ENCODE measurements at regions of chr6 and their contacts with region 1.

Region 1: DNA sequence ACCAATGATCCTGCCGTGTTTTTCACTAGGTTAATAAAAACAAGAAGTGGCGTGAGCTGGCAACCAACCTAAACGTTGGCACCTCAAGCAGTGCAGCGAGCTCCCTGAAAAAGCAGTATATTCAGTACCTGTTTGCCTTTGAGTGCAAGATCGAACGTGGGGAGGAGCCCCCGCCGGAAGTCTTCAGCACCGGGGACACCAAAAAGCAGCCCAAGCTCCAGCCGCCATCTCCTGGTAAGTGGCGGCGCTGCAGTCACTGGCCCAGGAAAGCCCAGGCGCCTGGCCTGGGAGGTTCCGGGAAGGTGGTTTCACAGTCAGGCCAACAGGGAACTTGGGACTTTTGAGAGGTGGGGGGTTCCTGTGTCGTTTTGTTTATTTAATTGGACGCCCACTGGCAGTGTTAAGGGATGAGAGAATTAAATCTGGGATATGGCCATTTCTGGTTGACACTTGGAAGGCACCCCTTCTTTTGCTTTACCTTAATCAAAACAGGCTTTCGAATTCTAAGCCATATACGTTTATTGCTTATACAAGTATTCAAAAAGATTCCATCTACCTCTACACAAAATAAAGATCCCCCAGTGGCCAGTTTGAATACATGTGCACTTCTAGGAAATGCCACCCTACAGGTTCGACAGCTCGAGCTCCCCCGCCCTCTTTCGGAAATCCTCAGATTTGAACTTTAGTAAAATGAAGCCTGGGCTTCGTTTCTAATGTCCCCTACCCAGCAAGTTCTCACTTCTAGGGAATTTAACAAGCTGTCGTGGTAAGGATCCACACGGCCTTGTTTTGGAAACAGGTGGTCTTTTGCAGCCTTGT is 138.9 kb downstream of the TMEM242 start:
- DNase-seq: peak; percentile 85
- H3K4me3 ChIP-seq: no peak overlapping the region
- H3K27ac ChIP-seq: no peak overlapping the region
- H3K4me1 ChIP-seq: no peaks in the 10 kb centered on the region
- H3K27me3 ChIP-seq: no peaks in the 10 kb centered on the region
- CTCF ChIP-seq: peak; percentile 96

Region 2: DNA sequence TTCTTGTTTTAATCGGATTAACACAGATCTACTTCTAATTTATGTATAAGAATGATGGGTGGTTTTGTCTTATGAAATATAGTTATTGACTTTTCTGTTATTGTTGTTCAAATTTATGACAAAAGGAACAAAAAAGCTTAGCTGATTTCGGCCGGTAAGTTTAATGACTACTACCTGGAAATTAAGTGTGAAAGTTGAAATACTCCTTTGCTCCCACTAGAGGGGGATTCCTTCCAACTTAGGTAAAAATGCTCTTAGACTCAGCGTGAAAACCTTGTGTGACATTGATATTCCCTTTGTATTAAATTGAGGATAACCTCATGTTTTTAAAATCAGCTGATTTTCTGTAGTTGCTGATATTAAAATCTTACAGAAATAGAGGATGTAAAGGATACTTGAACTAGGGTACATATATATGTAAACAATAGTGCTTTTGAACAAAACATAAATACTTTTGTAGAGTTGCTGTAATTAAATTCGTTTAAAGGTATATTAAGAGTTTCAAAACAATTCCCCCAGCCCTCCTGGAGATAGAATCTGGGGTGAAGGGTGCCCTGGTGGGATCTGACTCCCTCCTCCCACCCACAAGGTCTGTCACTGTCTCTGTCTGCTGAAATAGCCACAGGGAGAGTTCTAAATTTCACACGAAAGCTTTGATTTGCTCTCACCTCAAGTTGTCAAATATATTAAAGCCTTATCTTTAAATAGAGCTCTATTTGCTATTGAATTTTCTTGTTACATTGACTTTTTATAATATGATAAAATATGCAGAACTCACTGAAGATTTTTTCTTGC is 149.8 kb before region 1 on chr6:
- intact Hi-C with region 1: loop called (anchors 5 kb)
- DNase-seq: no peak
- H3K4me3 ChIP-seq: no peak overlapping the region
- H3K27ac ChIP-seq: no peak overlapping the region
- H3K4me1 ChIP-seq: peaks cover 6% of the 10 kb centered on the region
- H3K27me3 ChIP-seq: no peaks in the 10 kb centered on the region
- CTCF ChIP-seq: peak; percentile 53

Measured in colonic mucosa (tissue), 4 donors.